ENCODE measurements at regions of chr10 and their contacts with region 1.

Region 1: DNA sequence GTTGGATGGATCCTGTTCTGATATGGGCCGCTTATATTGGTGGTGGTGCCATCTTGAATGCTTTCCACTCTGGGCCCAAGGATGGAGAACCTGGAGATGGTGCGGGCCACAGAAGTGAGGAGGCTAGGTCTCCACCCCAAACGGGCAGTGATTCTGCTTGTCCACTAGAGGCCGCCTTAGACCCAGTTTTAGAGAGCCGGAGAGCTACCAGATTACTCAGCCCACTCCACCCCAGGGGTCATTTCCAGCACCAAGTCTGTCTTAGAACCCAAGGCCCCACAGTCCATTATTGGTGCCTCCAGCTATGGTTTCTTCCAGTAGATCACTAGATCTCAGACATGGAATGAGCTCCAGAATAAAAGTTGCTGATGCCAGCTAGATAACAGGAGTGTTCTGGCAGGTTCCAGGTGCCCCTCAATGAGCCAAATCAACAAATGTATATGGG is 11.8 kb upstream of the CAMK2G start:
- DNase-seq: peak; percentile 44 to 74 (median 69)
- ATAC-seq: peak; percentile 93
- H3K4me3 ChIP-seq: no peak overlapping the region
- H3K4me3 Mint-ChIP-seq: no peak overlapping the region
- H3K27ac ChIP-seq: no peak overlapping the region
- H3K27ac Mint-ChIP-seq: peak overlapping the region in 3 of 9 donors; percentile 39 to 60 (median 41)
- H3K4me1 ChIP-seq: no peaks in the 10 kb centered on the region
- H3K4me1 Mint-ChIP-seq: peaks cover 0 to 21% (median 0%) of the 10 kb centered on the region in 7 donors
- H3K27me3 ChIP-seq: no peaks in the 10 kb centered on the region
- H3K27me3 Mint-ChIP-seq: peaks cover 0 to 2% (median 0%) of the 10 kb centered on the region in 5 donors

Region 2: DNA sequence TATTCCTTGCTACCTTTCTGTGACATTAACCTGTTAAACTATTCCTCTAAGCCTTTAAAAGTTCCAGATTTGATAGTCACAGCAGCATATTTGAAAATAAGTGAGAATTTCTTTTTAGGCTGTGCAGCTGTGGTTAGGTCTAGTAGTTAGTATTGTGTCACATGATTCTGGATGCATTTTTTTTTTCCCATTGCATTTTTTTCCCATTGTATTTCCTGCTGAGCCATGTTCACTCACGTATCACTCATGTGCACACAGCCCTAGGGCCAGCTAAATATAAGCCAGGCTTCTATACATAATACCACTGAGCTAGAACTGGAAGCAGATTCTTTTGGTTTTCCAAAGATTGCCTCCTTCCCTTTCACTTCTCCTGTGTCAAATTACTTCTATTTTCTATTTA is 676.4 kb before region 1 on chr10:
- CTCF ChIA-PET with region 1: no interaction called
- POLR2A ChIA-PET with region 1: no interaction called
- intact Hi-C with region 1: no loop called
- DNase-seq: no peak
- ATAC-seq: no peak
- H3K4me3 ChIP-seq: no peak overlapping the region
- H3K4me3 Mint-ChIP-seq: no peak overlapping the region
- H3K27ac ChIP-seq: no peak overlapping the region
- H3K27ac Mint-ChIP-seq: peak overlapping the region in 1 of 9 donors; percentile 18
- H3K4me1 ChIP-seq: no peaks in the 10 kb centered on the region
- H3K4me1 Mint-ChIP-seq: peaks cover 0 to 2% (median 0%) of the 10 kb centered on the region in 7 donors
- H3K27me3 ChIP-seq: no peaks in the 10 kb centered on the region
- H3K27me3 Mint-ChIP-seq: no peaks in the 10 kb centered on the region

Region 3: GRCh38 chr10:73920089-73920488 is 34.0 kb after region 1 on chr10:
- CTCF ChIA-PET with region 1: interaction called, 6 read pairs
- POLR2A ChIA-PET with region 1: interaction called, 3 read pairs
- intact Hi-C with region 1: loop called in 1 of 2 experiments (anchors 1 kb)
- DNase-seq: peak in 4 of 9 donors; percentile 16 to 41 (median 37)
- ATAC-seq: peak; percentile 72
- H3K4me3 ChIP-seq: no peak overlapping the region
- H3K4me3 Mint-ChIP-seq: peak overlapping the region in 9 of 10 donors; percentile 1 to 58 (median 30)
- H3K27ac ChIP-seq: no peak overlapping the region
- H3K27ac Mint-ChIP-seq: peak overlapping the region in 1 of 9 donors; percentile 46
- H3K4me1 ChIP-seq: peaks cover 12 to 25% of the 10 kb centered on the region in 2 donors
- H3K4me1 Mint-ChIP-seq: peaks cover 29 to 45% (median 38%) of the 10 kb centered on the region in 7 donors
- H3K27me3 ChIP-seq: peaks cover 0 to 5% of the 10 kb centered on the region in 2 donors
- H3K27me3 Mint-ChIP-seq: peaks cover 15 to 53% (median 23%) of the 10 kb centered on the region in 5 donors

Region 4: DNA sequence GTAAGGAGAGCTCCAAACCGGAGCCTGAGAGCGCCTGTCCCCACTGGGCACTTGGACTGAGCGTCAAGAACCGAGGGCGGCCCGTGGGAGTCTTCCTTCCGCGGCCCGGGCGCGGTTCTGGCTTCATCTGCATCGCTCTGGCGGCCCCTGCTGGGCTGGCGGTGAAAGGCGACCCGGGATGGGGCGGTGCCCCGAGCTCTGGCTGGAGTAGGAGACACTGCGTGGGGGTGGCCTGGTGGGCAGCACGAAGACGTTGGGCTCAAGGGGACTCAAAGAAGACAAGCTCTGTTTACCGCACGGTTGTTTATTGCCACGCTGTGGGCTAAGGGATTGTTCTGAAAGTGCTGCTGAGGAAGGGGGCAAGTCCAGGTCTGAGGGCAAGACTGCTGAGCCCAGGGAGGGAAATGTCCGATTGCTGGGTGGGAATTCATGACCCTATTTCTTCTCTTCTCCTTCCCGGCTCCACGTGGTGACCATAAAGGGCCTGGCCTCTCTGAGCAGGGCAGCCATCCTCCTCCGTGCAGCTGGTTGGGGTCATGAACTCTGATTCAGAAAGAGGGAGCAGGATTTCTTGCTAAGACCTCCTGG is 54.6 kb after region 1 on chr10:
- CTCF ChIA-PET with region 1: interaction called, 301 read pairs
- POLR2A ChIA-PET with region 1: interaction called, 7 read pairs
- intact Hi-C with region 1: loop called (anchors 1 kb)
- DNase-seq: peak; percentile 61 to 89 (median 79)
- ATAC-seq: peak; percentile 99
- H3K4me3 ChIP-seq: no peak overlapping the region
- H3K4me3 Mint-ChIP-seq: peak overlapping the region in 7 of 10 donors; percentile 0 to 51 (median 42)
- H3K27ac ChIP-seq: no peak overlapping the region
- H3K27ac Mint-ChIP-seq: peak overlapping the region in 2 of 9 donors; percentile 71 to 80
- H3K4me1 ChIP-seq: peaks cover 0 to 6% of the 10 kb centered on the region in 2 donors
- H3K4me1 Mint-ChIP-seq: peaks cover 0 to 17% (median 7%) of the 10 kb centered on the region in 7 donors
- H3K27me3 ChIP-seq: no peaks in the 10 kb centered on the region
- H3K27me3 Mint-ChIP-seq: peaks cover 0 to 24% (median 0%) of the 10 kb centered on the region in 5 donors

Region 5: GRCh38 chr10:74035303-74035702 is 149.2 kb after region 1 on chr10:
- CTCF ChIA-PET with region 1: interaction called, 22 read pairs
- POLR2A ChIA-PET with region 1: interaction called, 3 read pairs
- intact Hi-C with region 1: loop called in 1 of 2 experiments (anchors 1 kb)
- DNase-seq: peak in 4 of 9 donors; percentile 7 to 19 (median 10)
- ATAC-seq: no peak
- H3K4me3 ChIP-seq: no peak overlapping the region
- H3K4me3 Mint-ChIP-seq: no peak overlapping the region
- H3K27ac ChIP-seq: no peak overlapping the region
- H3K27ac Mint-ChIP-seq: peak overlapping the region in 8 of 9 donors; percentile 13 to 74 (median 34)
- H3K4me1 ChIP-seq: peaks cover 0 to 5% of the 10 kb centered on the region in 2 donors
- H3K4me1 Mint-ChIP-seq: peaks cover 22 to 52% (median 45%) of the 10 kb centered on the region in 7 donors
- H3K27me3 ChIP-seq: no peaks in the 10 kb centered on the region
- H3K27me3 Mint-ChIP-seq: no peaks in the 10 kb centered on the region

Region 6: GRCh38 chr10:74081192-74081803 is 195.2 kb after region 1 on chr10:
- CTCF ChIA-PET with region 1: interaction called, 45 read pairs
- POLR2A ChIA-PET with region 1: no interaction called
- intact Hi-C with region 1: loop called (anchors 1 kb)
- DNase-seq: peak in 7 of 9 donors; percentile 14 to 51 (median 41)
- ATAC-seq: peak; percentile 71
- H3K4me3 ChIP-seq: no peak overlapping the region
- H3K4me3 Mint-ChIP-seq: no peak overlapping the region
- H3K27ac ChIP-seq: no peak overlapping the region
- H3K27ac Mint-ChIP-seq: no peak overlapping the region
- H3K4me1 ChIP-seq: peaks cover 0 to 15% of the 10 kb centered on the region in 2 donors
- H3K4me1 Mint-ChIP-seq: peaks cover 0 to 40% (median 6%) of the 10 kb centered on the region in 7 donors
- H3K27me3 ChIP-seq: no peaks in the 10 kb centered on the region
- H3K27me3 Mint-ChIP-seq: no peaks in the 10 kb centered on the region

Region 7: GRCh38 chr10:74234569-74234968 is 348.5 kb after region 1 on chr10:
- CTCF ChIA-PET with region 1: no interaction called
- POLR2A ChIA-PET with region 1: no interaction called
- intact Hi-C with region 1: loop called in 1 of 2 experiments (anchors 1 kb)
- DNase-seq: peak in 4 of 9 donors; percentile 12 to 29 (median 20)
- ATAC-seq: no peak
- H3K4me3 ChIP-seq: no peak overlapping the region
- H3K4me3 Mint-ChIP-seq: no peak overlapping the region
- H3K27ac ChIP-seq: no peak overlapping the region
- H3K27ac Mint-ChIP-seq: peak overlapping the region in 1 of 9 donors; percentile 26
- H3K4me1 ChIP-seq: no peaks in the 10 kb centered on the region
- H3K4me1 Mint-ChIP-seq: peaks cover 0 to 11% (median 0%) of the 10 kb centered on the region in 7 donors
- H3K27me3 ChIP-seq: no peaks in the 10 kb centered on the region
- H3K27me3 Mint-ChIP-seq: no peaks in the 10 kb centered on the region

Region 8: DNA sequence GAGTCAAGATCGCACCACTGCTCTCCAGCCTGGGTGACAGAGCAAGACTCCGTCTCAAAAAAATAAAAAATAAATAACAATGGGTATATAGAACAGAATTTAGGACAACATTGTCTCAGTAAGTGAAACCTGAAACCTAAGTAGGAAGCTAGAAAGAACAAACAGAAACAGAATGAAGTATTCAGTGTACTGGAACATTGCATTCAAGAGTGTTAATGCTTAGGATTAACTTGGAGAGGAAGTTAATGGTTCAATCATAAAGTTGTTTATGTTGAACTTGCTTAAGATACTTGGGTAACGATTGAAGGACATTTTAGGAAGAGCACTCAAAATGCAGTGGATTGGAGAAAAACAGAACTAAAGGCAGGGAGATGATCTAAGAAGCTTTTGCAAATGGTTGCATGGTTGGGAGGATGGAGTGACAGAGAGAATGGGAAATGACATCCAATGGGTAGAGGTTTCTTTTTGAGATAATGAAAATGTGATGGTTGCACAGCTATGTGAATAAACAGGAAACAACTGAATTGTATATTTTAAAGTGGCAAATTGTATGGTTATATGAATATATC is 498.6 kb after region 1 on chr10:
- CTCF ChIA-PET with region 1: no interaction called
- POLR2A ChIA-PET with region 1: no interaction called
- intact Hi-C with region 1: no loop called
- DNase-seq: no peak
- ATAC-seq: no peak
- H3K4me3 ChIP-seq: no peak overlapping the region
- H3K4me3 Mint-ChIP-seq: peak overlapping the region in 2 of 10 donors; percentile 8 to 48
- H3K27ac ChIP-seq: no peak overlapping the region
- H3K27ac Mint-ChIP-seq: peak overlapping the region in 5 of 9 donors; percentile 13 to 99 (median 52)
- H3K4me1 ChIP-seq: peaks cover 7 to 35% of the 10 kb centered on the region in 2 donors
- H3K4me1 Mint-ChIP-seq: peaks cover 21 to 61% (median 41%) of the 10 kb centered on the region in 7 donors
- H3K27me3 ChIP-seq: no peaks in the 10 kb centered on the region
- H3K27me3 Mint-ChIP-seq: no peaks in the 10 kb centered on the region